ENCODE measurements at regions of chr15 and their contacts with region 1.

Region 1: DNA sequence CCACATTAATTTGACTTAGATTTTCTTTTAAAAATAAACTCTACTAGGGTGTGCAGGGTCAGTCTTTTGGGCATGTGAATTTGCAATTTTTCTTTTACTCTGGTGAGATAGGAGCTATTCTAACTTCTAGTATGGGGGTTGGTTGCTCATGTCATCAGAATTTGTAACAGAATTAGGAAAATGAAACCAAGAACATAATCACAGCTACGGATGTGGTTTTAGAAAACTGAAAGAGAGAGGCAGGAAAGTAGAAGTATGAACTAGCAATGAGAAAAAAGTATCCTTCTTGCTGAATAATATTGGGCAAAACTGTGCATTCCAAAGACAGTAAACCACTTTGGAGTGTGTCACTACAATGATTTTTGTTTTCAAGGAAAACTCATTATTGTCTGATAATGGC is 43.3 kb downstream of the ADPGK start:
- DNase-seq: no peak
- ATAC-seq: peak; percentile 25
- H3K4me3 Mint-ChIP-seq: peak overlapping the region; percentile 32
- H3K27ac Mint-ChIP-seq: peak overlapping the region; percentile 54
- H3K4me1 Mint-ChIP-seq: peaks cover 23% of the 10 kb centered on the region
- H3K27me3 Mint-ChIP-seq: no peaks in the 10 kb centered on the region
- CTCF ChIP-seq: no peak

Region 2: GRCh38 chr15:72516777-72517176 is 223.4 kb before region 1 on chr15:
- CTCF ChIA-PET with region 1: no interaction called
- POLR2A ChIA-PET with region 1: interaction called, 11 read pairs
- intact Hi-C with region 1: no loop called
- DNase-seq: no peak
- ATAC-seq: no peak
- H3K4me3 Mint-ChIP-seq: no peak overlapping the region
- H3K27ac Mint-ChIP-seq: no peak overlapping the region
- H3K4me1 Mint-ChIP-seq: peaks cover 34% of the 10 kb centered on the region
- H3K27me3 Mint-ChIP-seq: no peaks in the 10 kb centered on the region
- CTCF ChIP-seq: no peak

Region 3: DNA sequence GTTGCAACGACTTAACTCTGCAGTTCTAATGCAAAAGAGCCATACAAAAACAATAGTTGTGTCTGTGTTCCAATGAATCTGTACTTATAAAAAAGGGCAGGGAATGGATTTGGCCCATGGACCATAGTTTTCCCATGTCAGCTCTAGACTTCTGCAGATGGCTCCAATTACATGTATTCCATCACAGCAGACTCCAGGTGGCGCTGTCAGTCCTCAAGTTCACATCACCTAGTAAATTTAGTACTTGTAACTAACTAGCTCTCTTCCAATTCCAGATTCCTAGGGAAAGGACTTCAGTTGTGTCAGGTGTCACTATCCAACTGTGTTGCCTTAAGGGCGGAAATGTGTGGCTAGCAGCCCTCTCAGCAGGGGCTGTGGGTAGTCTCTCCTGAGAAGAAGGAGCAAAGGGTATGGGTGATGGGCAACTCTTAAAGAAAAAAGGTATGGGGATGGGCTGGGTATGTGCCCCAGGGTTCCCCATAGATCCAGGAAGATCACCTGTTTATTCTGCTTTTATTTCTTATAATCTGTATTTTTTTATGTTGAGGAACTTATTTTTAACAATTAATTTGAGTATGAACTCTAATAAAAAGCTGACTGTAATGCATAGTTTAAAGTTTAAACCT is 18.0 kb before region 1 on chr15:
- CTCF ChIA-PET with region 1: interaction called, 18 read pairs
- POLR2A ChIA-PET with region 1: no interaction called
- intact Hi-C with region 1: no loop called
- DNase-seq: peak; percentile 32
- ATAC-seq: no peak
- H3K4me3 Mint-ChIP-seq: no peak overlapping the region
- H3K27ac Mint-ChIP-seq: no peak overlapping the region
- H3K4me1 Mint-ChIP-seq: no peaks in the 10 kb centered on the region
- H3K27me3 Mint-ChIP-seq: no peaks in the 10 kb centered on the region
- CTCF ChIP-seq: no peak